Heart left ventricle (tissue), 16 donors: ENCODE measurements at regions of chr15 and their contacts with region 1.

Region 1: GRCh38 chr15:41557673-41558399 is 1.2 kb upstream of the TYRO3 start:
- DNase-seq: peak; percentile 58 to 83 (median 66)
- ATAC-seq: peak; percentile 64 to 77 (median 71)
- H3K4me3 ChIP-seq: peak overlapping the region in 8 of 12 donors; percentile 9 to 94 (median 63)
- H3K27ac ChIP-seq: peak overlapping the region in 6 of 12 donors; percentile 18 to 38 (median 32)
- H3K4me1 ChIP-seq: peaks cover 0 to 43% (median 19%) of the 10 kb centered on the region in 12 donors
- H3K27me3 ChIP-seq: peaks cover 0 to 6% (median 0%) of the 10 kb centered on the region in 9 donors
- CTCF ChIP-seq: peak; percentile 72 to 90 (median 82)
- POLR2A ChIP-seq: no peak

Region 2: GRCh38 chr15:41585127-41586047 is 27.6 kb after region 1 on chr15:
- intact Hi-C with region 1: loop called in 1 of 10 experiments (anchors 1 kb)
- DNase-seq: peak in 4 of 5 donors; percentile 43 to 64 (median 50)
- ATAC-seq: peak; percentile 64 to 90 (median 84)
- H3K4me3 ChIP-seq: peak overlapping the region; percentile 22 to 71 (median 56)
- H3K27ac ChIP-seq: peak overlapping the region in 10 of 12 donors; percentile 8 to 77 (median 42)
- H3K4me1 ChIP-seq: peaks cover 0 to 12% (median 6%) of the 10 kb centered on the region in 12 donors
- H3K27me3 ChIP-seq: peaks cover 0 to 8% (median 0%) of the 10 kb centered on the region in 9 donors
- CTCF ChIP-seq: peak in 10 of 12 donors; percentile 15 to 54 (median 41)
- POLR2A ChIP-seq: no peak

Region 3: GRCh38 chr15:41811432-41812195 is 253.8 kb after region 1 on chr15:
- intact Hi-C with region 1: loop called in 7 of 10 experiments (anchors 5 to 10 kb)
- DNase-seq: peak; percentile 79 to 87 (median 86)
- ATAC-seq: peak; percentile 84 to 92 (median 91)
- H3K4me3 ChIP-seq: no peak overlapping the region
- H3K27ac ChIP-seq: no peak overlapping the region
- H3K4me1 ChIP-seq: peaks cover 0 to 12% (median 2%) of the 10 kb centered on the region in 12 donors
- H3K27me3 ChIP-seq: no peaks in the 10 kb centered on the region
- CTCF ChIP-seq: peak; percentile 77 to 95 (median 90)
- POLR2A ChIP-seq: no peak